ENCODE measurements at regions of chr2 and their contacts with region 1.

Region 1: GRCh38 chr2:101802329-101802728 is 104.8 kb downstream of the MAP4K4 start:
- DNase-seq: no peak

Region 2: GRCh38 chr2:101746388-101746723 is 56.0 kb before region 1 on chr2:
- intact Hi-C with region 1: no loop called
- DNase-seq: no peak

Region 3: DNA sequence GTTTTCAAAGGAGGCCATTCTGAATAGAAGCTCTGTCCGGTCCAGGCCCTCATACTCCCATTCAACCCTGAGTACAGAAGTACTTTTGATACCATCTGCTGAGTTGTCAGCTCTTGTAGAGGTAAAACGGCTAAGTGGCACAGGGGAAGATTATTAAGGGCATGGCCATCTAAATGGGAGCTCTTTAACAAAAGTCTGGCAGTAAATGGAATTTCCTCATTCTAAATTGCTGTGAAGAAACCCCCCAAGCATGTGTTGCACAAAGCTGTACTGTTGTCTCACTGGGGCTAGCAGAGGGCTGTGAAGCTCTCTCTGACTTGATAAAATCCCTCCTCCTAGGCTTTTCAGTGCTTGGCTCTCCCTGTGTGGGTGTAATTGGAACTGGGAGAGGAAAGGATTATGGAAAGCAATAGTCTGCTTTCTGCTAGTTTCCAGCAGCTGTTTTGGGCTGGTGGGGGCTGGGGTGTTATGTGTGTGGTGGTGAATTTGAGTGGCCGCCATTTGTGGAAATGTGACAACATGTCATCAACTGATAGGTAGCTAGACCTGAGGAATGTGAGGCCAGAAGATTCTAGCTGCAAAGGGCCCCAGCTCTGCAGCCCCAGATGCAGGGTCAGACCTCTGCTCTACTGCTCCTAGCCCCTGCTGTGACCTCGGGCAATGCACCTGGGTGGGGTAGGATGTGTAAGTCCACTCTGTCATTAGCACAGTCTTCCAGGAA is 39.7 kb before region 1 on chr2:
- intact Hi-C with region 1: loop called (anchors 5 kb)
- DNase-seq: peak in 3 of 10 donors; percentile 57 to 89 (median 72)

Region 4: GRCh38 chr2:101983928-101984327 is 181.6 kb after region 1 on chr2:
- intact Hi-C with region 1: no loop called
- DNase-seq: no peak

Measured in posterior cingulate gyrus (tissue), 11 donors.